Activated CD4-positive, alpha-beta T cell treated with anti-CD3 and anti-CD28 coated beads for 36 hours (primary cell): ENCODE measurements at regions of chr3 and their contacts with region 1.

Region 1: DNA sequence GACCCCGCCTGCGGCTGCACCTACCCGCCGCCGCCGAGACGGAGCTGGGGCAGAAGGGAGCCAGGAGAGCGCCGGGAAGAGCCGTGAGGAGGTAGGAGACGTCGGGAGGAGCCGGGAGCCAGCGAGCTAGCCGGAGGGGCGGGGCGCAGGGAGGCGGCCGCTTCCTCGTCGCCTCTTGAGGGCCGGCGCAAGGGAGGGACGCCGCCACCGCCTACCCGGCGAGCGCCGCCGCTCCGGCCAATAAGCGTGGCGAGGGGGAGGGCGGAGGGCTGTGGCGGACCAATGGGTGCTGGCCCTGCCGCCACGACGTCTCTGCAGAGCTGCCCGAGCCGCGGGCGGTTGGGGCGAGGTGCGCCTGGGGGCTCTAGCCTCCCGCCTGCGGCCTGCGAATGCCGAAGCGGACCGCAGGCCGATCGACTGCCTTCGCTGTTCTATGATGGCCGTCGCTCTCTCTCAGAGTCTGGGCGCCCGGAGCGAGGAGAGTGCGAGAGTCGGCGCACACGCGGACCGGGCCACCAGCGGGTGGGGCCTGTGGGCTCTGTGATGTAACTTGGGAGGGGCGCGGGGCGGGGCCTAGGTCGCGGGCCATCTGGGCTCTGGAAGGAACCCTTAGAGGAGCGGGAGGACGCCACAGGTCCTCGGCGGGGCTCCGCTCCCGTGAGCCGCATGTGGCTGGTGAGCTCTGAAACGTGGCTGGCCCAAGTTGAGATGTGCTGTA is 72.7 kb upstream of the MAP4 start:
- DNase-seq: peak; percentile 97
- ATAC-seq: peak; percentile 96
- H3K4me3 Mint-ChIP-seq: peak overlapping the region; percentile 97
- H3K27ac Mint-ChIP-seq: peak overlapping the region; percentile 93
- H3K4me1 Mint-ChIP-seq: peaks cover 29% of the 10 kb centered on the region
- H3K27me3 Mint-ChIP-seq: no peaks in the 10 kb centered on the region

Region 2: DNA sequence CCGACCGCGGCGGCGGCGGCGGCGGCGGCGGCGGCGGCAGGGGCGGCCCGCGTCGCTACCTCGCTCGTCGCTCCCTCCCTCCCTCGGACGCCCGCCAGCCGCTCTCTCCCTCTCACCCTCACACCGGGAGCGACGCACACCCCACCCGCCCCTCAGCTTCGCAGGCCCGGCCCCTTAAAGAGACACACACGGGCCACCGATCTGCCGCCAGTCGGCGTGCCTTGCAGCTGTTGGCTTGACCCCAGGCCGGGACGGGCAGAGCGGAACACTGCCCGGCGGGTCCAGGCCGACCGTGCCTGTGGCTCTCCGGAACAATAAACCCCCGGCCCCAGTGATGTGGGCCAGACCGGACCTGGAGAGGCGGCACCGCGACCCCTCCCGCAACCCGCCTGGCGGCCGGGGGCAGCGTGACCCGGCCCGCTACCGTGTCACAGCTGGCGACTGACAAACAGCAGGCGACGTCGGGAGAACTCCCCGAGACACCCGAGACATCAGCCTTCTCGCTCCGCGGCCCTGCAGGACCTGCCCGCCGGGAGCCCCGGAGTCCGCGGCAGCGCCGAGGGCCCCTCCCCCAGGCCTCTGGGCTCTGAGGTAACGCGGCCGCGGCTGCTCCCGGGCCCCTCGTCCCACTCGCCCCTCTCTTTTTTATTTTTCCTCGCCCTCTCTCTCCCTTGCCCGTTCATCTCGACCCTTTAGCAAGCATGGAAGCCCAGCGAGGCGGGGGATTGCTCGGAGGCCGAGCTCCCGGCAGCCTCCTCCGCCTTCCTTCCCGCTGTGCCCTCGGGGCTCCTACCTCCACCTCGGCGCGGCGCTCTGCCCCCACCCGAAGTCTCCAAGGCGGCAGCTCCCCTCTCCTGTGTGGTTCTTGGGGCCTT is 924.7 kb before region 1 on chr3 and contains the start of gene SETD2:
- CTCF ChIA-PET with region 1: no interaction called
- POLR2A ChIA-PET with region 1: no interaction called
- intact Hi-C with region 1: loop called in 1 of 2 experiments (anchors 5 kb)
- DNase-seq: peak; percentile 94
- ATAC-seq: peak; percentile 86
- H3K4me3 Mint-ChIP-seq: peak within 1 kb of the TSS; percentile 97
- H3K27ac Mint-ChIP-seq: peak within 1 kb of the TSS; percentile 99
- H3K4me1 Mint-ChIP-seq: peaks cover 40% of the 10 kb centered on the region
- H3K27me3 Mint-ChIP-seq: no peaks in the 10 kb centered on the region
- total RNA-seq, gene SETD2: 31.8 to 35.8 TPM

Region 3: GRCh38 chr3:47475570-47476329 is 613.2 kb before region 1 on chr3 and contains the start of gene SCAP:
- CTCF ChIA-PET with region 1: no interaction called
- POLR2A ChIA-PET with region 1: no interaction called
- intact Hi-C with region 1: loop called in 1 of 2 experiments (anchors 1 kb)
- DNase-seq: peak; percentile 98
- ATAC-seq: peak; percentile 95
- H3K4me3 Mint-ChIP-seq: peak within 1 kb of the TSS; percentile 89
- H3K27ac Mint-ChIP-seq: peak within 1 kb of the TSS; percentile 84
- H3K4me1 Mint-ChIP-seq: peaks cover 33% of the 10 kb centered on the region
- H3K27me3 Mint-ChIP-seq: no peaks in the 10 kb centered on the region
- total RNA-seq, gene SCAP: 44.5 to 51.2 TPM

Region 4: GRCh38 chr3:47781685-47782445 is 307.0 kb before region 1 on chr3 and contains the start of gene SMARCC1:
- CTCF ChIA-PET with region 1: no interaction called
- POLR2A ChIA-PET with region 1: no interaction called
- intact Hi-C with region 1: loop called in 1 of 2 experiments (anchors 1 kb)
- DNase-seq: peak; percentile 99
- ATAC-seq: peak; percentile 93
- H3K4me3 Mint-ChIP-seq: peak within 1 kb of the TSS; percentile 99
- H3K27ac Mint-ChIP-seq: peak within 1 kb of the TSS; percentile 97
- H3K4me1 Mint-ChIP-seq: peaks cover 21% of the 10 kb centered on the region
- H3K27me3 Mint-ChIP-seq: no peaks in the 10 kb centered on the region
- total RNA-seq, gene SMARCC1: 129 to 130 TPM

Region 5: GRCh38 chr3:48240711-48241491 is 152.0 kb after region 1 on chr3 and contains the start of gene ZNF589:
- CTCF ChIA-PET with region 1: interaction called, 3 read pairs
- POLR2A ChIA-PET with region 1: no interaction called
- intact Hi-C with region 1: loop called in 1 of 2 experiments (anchors 2 kb)
- DNase-seq: peak; percentile 97
- ATAC-seq: peak; percentile 99
- H3K4me3 Mint-ChIP-seq: peak within 1 kb of the TSS; percentile 87
- H3K27ac Mint-ChIP-seq: peak within 1 kb of the TSS; percentile 84
- H3K4me1 Mint-ChIP-seq: peaks cover 26% of the 10 kb centered on the region
- H3K27me3 Mint-ChIP-seq: no peaks in the 10 kb centered on the region
- total RNA-seq, gene ZNF589: 28.6 to 29.6 TPM

Region 6: GRCh38 chr3:48595526-48596121 is 506.7 kb after region 1 on chr3:
- CTCF ChIA-PET with region 1: no interaction called
- POLR2A ChIA-PET with region 1: no interaction called
- intact Hi-C with region 1: no loop called
- DNase-seq: no peak
- ATAC-seq: peak; percentile 6
- H3K4me3 Mint-ChIP-seq: no peak overlapping the region
- H3K27ac Mint-ChIP-seq: no peak overlapping the region
- H3K4me1 Mint-ChIP-seq: no peaks in the 10 kb centered on the region
- H3K27me3 Mint-ChIP-seq: peaks cover 18% of the 10 kb centered on the region

Region 7: GRCh38 chr3:48609088-48610005 is 520.4 kb after region 1 on chr3 and contains the start of gene UQCRC1:
- CTCF ChIA-PET with region 1: no interaction called
- POLR2A ChIA-PET with region 1: no interaction called
- intact Hi-C with region 1: loop called in 1 of 2 experiments (anchors 1 kb)
- DNase-seq: peak; percentile 96
- ATAC-seq: peak; percentile 96
- H3K4me3 Mint-ChIP-seq: peak within 1 kb of the TSS; percentile 97
- H3K27ac Mint-ChIP-seq: peak within 1 kb of the TSS; percentile 95
- H3K4me1 Mint-ChIP-seq: peaks cover 27% of the 10 kb centered on the region
- H3K27me3 Mint-ChIP-seq: no peaks in the 10 kb centered on the region
- total RNA-seq, gene UQCRC1: 205 to 231 TPM

Region 8: DNA sequence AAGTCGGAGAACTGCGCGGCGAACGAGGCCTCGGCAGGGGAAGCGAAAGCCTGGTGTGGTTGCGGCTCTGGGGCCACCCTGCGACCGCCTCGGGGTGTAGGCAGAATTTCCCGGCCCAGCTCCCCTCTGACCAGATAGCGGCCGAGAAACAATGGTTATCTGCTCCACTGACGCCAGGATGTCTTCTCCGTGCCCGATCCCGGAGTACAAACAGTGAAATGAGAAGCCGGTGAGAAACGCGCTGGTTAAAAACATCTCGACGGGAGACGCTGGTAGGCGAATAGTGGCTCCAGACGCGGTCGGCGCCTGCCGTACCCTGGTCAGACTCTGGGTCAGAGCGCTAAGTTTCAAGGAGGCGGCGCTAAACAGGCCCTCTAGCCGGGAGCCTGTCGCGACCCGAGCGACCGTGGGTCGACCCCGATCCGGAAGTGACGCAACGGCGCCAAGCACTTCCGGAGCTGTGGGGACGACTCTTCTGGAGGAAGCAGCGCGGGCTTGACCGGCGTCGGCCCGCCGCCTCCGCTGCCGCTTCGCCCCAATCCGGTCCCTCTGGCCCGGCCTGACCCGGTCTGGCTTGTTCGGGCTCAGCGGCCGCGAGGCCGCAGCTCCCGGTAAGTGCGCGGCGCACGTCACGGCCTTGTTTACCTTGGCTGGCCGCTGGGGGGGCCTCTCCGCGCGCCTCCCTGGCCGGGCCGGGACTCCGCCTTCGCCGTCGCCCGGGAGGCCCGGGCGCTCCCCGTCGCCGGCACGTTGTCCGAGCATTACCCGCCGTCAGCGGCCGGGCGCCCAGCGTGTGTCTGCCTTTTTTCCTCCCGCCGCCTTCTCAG is 829.7 kb after region 1 on chr3 and contains the start of gene ARIH2:
- CTCF ChIA-PET with region 1: no interaction called
- POLR2A ChIA-PET with region 1: no interaction called
- intact Hi-C with region 1: loop called in 1 of 2 experiments (anchors 10 kb)
- DNase-seq: peak; percentile 94
- ATAC-seq: peak; percentile 75
- H3K4me3 Mint-ChIP-seq: peak within 1 kb of the TSS; percentile 90
- H3K27ac Mint-ChIP-seq: peak within 1 kb of the TSS; percentile 100
- H3K4me1 Mint-ChIP-seq: peaks cover 30% of the 10 kb centered on the region
- H3K27me3 Mint-ChIP-seq: no peaks in the 10 kb centered on the region
- total RNA-seq, gene ARIH2: 105 to 112 TPM